ENCODE measurements at regions of chr11 and their contacts with region 1.

Region 1: GRCh38 chr11:44095506-44096394 is at the start of gene EXT2:
- DNase-seq: peak; percentile 61
- H3K4me3 ChIP-seq: peak within 1 kb of the TSS; percentile 82
- H3K27ac ChIP-seq: no peak within 1 kb of the TSS
- H3K27me3 ChIP-seq: peaks cover 8% of the 10 kb centered on the region
- CTCF ChIP-seq: peak; percentile 90
- polyA plus RNA-seq, gene EXT2: 128 and 138 TPM in 2 replicates

Region 2: DNA sequence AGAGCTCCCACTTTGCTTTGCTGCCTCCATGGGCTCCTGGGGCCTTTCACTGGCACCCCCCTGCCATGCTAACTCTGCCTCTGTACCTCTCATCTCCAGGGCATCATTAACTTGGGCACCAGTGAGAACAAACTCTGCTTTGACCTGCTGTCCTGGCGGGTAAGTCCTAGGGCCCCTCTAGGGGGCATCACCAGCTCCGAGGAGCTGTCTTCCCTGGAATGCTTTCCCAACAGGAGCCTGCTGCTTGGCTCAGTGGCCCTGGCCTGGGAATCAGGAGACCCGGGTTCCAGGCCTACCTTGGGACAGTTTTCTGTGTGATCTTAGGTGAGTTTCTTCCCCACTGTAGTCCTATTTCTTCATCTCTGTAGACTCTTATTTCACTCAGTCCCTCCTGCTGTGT is 24.6 kb before region 1 on chr11:
- CTCF ChIA-PET with region 1: interaction called, 16 read pairs
- POLR2A ChIA-PET with region 1: no interaction called
- DNase-seq: no peak
- H3K4me3 ChIP-seq: no peak overlapping the region
- H3K27ac ChIP-seq: no peak overlapping the region
- H3K27me3 ChIP-seq: no peaks in the 10 kb centered on the region
- CTCF ChIP-seq: no peak

Region 3: DNA sequence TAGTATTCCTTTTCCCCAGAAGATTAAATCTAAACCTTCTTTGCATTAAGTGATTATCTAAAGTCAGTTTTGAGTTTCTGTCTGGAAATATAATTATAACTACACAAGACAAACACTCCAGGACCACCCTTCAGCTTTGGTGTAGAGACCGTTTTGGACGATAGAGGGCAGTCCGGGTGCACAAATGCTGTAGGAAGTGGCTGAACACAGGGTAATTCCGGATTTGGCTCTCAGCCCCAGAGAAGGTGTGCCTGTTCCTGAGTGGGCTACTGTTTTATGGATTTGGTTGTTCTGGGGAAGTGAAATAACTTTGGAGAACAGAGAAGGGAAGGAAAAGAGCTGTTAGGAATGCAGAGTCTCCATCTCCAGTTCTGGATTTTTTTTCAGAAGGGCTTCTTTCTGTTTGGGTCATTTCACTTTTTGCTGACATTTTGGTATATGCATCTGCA is 14.5 kb after region 1 on chr11:
- CTCF ChIA-PET with region 1: interaction called, 112 read pairs
- POLR2A ChIA-PET with region 1: no interaction called
- DNase-seq: no peak
- H3K4me3 ChIP-seq: no peak overlapping the region
- H3K27ac ChIP-seq: no peak overlapping the region
- H3K27me3 ChIP-seq: no peaks in the 10 kb centered on the region
- CTCF ChIP-seq: peak; percentile 89

Region 4: GRCh38 chr11:44133335-44133946 is 37.7 kb after region 1 on chr11:
- CTCF ChIA-PET with region 1: interaction called, 10 read pairs
- POLR2A ChIA-PET with region 1: no interaction called
- DNase-seq: no peak
- H3K4me3 ChIP-seq: no peak overlapping the region
- H3K27ac ChIP-seq: no peak overlapping the region
- H3K27me3 ChIP-seq: no peaks in the 10 kb centered on the region
- CTCF ChIP-seq: peak; percentile 81

Region 5: DNA sequence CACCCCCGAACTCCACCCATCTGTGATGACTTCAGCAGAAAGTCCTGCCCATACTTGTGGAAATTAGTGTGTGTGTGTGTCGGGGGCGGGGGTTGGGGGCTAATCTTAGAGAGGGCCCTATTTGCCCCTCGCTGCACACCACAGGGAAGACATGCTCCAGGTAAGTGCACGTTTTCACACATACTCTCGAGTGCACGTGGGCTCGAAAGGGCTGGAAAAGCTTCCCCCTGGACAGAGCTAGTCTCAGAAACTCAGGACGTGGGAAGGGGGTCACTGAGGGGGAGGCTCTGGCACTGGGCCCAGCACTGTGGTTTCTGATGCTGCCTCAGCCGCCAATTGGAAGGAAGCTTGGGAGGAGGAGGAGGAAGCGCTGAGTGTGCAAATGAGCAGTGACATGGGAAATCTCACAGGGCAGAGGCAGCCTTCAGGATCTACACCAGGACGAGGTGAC is 429.0 kb after region 1 on chr11:
- CTCF ChIA-PET with region 1: interaction called, 12 read pairs
- POLR2A ChIA-PET with region 1: no interaction called
- DNase-seq: no peak
- H3K4me3 ChIP-seq: no peak overlapping the region
- H3K27ac ChIP-seq: no peak overlapping the region
- H3K27me3 ChIP-seq: peaks cover 23% of the 10 kb centered on the region
- CTCF ChIP-seq: no peak